Tibial artery (tissue), 4 donors: ENCODE measurements at regions of chr10 and their contacts with region 1.

Region 1: DNA sequence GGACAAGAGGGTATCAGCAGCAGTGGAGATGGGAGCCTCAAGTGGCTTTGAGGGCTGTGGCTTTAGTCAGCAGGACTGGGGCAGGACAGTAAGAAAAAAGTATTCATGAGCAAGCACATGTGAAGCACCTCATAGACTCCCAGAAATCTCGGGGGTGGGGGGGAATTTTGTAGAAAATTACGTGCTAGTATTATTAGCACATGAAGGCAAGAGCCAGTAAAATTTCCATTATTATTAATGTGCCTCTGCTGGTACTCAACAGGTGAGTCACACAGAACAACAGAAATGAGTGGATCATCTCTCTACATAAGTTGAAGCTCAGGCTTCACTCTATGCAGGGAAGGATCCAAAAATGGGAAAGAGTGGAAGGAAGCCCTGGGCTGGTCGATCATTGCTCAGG is 114.5 kb downstream of the MYOF start:
- DNase-seq: no peak
- H3K4me3 ChIP-seq: no peak overlapping the region
- H3K27ac ChIP-seq: no peak overlapping the region
- H3K4me1 ChIP-seq: no peaks in the 10 kb centered on the region
- H3K27me3 ChIP-seq: no peaks in the 10 kb centered on the region
- CTCF ChIP-seq: no peak

Region 2: GRCh38 chr10:93224005-93224779 is 143.5 kb before region 1 on chr10:
- intact Hi-C with region 1: no loop called
- DNase-seq: no peak
- H3K4me3 ChIP-seq: no peak overlapping the region
- H3K27ac ChIP-seq: no peak overlapping the region
- H3K4me1 ChIP-seq: no peaks in the 10 kb centered on the region
- H3K27me3 ChIP-seq: no peaks in the 10 kb centered on the region
- CTCF ChIP-seq: no peak

Region 3: GRCh38 chr10:93288654-93289634 is 78.7 kb before region 1 on chr10:
- intact Hi-C with region 1: no loop called
- DNase-seq: peak; percentile 56 to 74
- H3K4me3 ChIP-seq: no peak overlapping the region
- H3K27ac ChIP-seq: no peak overlapping the region
- H3K4me1 ChIP-seq: peaks cover 0 to 4% (median 0%) of the 10 kb centered on the region in 4 donors
- H3K27me3 ChIP-seq: no peaks in the 10 kb centered on the region
- CTCF ChIP-seq: peak; percentile 77 to 85

Region 4: GRCh38 chr10:93656155-93656554 is 288.5 kb after region 1 on chr10:
- intact Hi-C with region 1: loop called (anchors 2 kb)
- DNase-seq: no peak
- H3K4me3 ChIP-seq: no peak overlapping the region
- H3K27ac ChIP-seq: no peak overlapping the region
- H3K4me1 ChIP-seq: peaks cover 0 to 26% (median 3%) of the 10 kb centered on the region in 4 donors
- H3K27me3 ChIP-seq: no peaks in the 10 kb centered on the region
- CTCF ChIP-seq: no peak